AG04450 (cell line): ENCODE measurements at regions of chr10 and their contacts with region 1.

Region 1: GRCh38 chr10:5548527-5549223 is 23.9 kb downstream of the CALML3 start:
- DNase-seq: peak; percentile 93
- H3K4me3 ChIP-seq: 0 out of 2 replicates have a peak overlapping the region, but pooled peaks have one; percentile 7
- H3K27ac ChIP-seq: peak overlapping the region; percentile 92
- H3K27me3 ChIP-seq: no peaks in the 10 kb centered on the region
- CTCF ChIP-seq: no peak

Region 2: DNA sequence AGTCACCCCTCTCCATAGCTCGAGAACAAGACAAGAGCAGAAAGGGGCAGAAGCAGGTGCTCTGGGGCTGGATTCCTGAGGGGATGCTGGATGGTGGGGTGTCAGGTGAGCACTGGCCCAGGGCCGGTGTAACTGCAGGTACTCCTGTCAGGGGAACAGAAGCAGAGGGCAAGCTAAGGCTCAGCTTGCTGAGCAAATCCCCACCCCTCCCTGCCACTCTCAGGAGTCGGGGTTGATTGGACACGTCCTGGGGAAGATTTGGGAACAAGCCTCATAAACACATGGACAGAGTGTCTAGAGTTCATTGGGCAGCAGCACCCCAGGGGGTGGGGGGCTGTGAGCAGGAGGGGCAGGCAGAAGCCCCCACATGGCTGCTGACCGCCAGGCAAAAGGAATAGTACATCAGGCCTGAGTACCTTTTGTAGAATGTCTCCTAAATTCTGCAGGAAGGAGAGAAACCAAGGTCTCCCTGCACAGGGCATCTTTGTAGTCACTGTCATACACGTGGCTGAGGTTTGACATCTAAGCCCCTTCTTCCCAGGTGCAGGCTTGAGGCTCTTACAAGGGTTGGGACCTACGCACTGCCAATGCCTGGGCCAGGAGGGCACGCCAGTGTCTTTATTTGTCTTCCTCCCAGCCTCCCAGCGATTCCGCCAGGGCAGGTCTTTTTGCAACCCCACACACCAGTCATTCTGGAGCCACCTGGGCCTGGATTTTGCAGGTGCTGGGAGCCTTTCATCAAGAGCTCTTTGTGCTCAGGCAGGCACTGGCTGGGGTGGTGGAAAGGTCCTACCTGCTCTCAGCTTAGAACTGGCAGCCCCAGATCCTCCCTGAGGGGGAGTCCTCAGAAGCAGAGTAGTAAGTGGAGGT is 21.1 kb before region 1 on chr10:
- CTCF ChIA-PET with region 1: no interaction called
- POLR2A ChIA-PET with region 1: no interaction called
- DNase-seq: no peak
- H3K4me3 ChIP-seq: no peak overlapping the region
- H3K27ac ChIP-seq: no peak overlapping the region
- H3K27me3 ChIP-seq: no peaks in the 10 kb centered on the region
- CTCF ChIP-seq: no peak

Region 3: DNA sequence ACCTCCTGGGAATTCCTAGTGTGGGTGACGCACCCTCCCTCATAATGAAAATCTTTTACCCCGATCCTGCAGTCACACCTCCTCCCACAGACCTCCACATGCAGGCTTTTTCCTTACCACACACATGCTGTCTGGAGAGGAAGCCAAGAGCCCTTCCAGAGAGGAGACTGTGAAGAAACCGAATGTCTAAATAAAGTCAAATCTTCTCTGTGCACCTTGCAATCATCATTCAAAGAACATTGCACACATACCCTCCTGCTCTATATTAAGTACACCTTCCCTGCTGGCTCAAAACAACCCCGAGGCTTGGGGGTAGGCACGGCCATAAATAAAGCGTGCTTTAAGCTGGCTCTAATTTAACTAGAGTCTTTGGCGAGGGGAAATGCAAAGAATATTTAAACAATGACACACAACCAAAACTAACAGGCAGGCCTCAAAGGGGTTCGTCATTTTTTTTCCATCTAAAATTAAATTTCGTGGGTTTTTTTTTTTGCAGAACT is 11.0 kb after region 1 on chr10:
- CTCF ChIA-PET with region 1: interaction called, 3 read pairs
- POLR2A ChIA-PET with region 1: interaction called, 13 read pairs
- DNase-seq: no peak
- H3K4me3 ChIP-seq: no peak overlapping the region
- H3K27ac ChIP-seq: peak overlapping the region; percentile 52
- H3K27me3 ChIP-seq: no peaks in the 10 kb centered on the region
- CTCF ChIP-seq: no peak